PC-9 (cell line): ENCODE measurements at regions of chr10 and their contacts with region 1.

Region 1: GRCh38 chr10:86489960-86490612 is 31.5 kb downstream of the WAPL start:
- DNase-seq: no peak
- H3K4me3 ChIP-seq: no peak overlapping the region
- H3K27ac ChIP-seq: no peak overlapping the region
- H3K4me1 ChIP-seq: no peaks in the 10 kb centered on the region
- H3K27me3 ChIP-seq: no peaks in the 10 kb centered on the region
- CTCF ChIP-seq: no peak

Region 2: GRCh38 chr10:85212526-85212925 is 1277.6 kb before region 1 on chr10:
- CTCF ChIA-PET with region 1: interaction called, 14 read pairs
- POLR2A ChIA-PET with region 1: no interaction called
- intact Hi-C with region 1: no loop called
- DNase-seq: no peak
- H3K4me3 ChIP-seq: no peak overlapping the region
- H3K27ac ChIP-seq: no peak overlapping the region
- H3K4me1 ChIP-seq: no peaks in the 10 kb centered on the region
- H3K27me3 ChIP-seq: no peaks in the 10 kb centered on the region
- CTCF ChIP-seq: no peak